ENCODE measurements at regions of chr9 and their contacts with region 1.

Region 1: GRCh38 chr9:3525836-3526164 is at the start of gene RFX3:
- DNase-seq: peak; percentile 92
- ATAC-seq: peak; percentile 62
- H3K4me3 Mint-ChIP-seq: peak within 1 kb of the TSS; percentile 96
- H3K27ac Mint-ChIP-seq: peak within 1 kb of the TSS; percentile 99
- H3K4me1 Mint-ChIP-seq: peaks cover 40% of the 10 kb centered on the region
- H3K27me3 Mint-ChIP-seq: no peaks in the 10 kb centered on the region
- CTCF ChIP-seq: no peak
- total RNA-seq, gene RFX3: 10.3 to 12.3 TPM

Region 2: DNA sequence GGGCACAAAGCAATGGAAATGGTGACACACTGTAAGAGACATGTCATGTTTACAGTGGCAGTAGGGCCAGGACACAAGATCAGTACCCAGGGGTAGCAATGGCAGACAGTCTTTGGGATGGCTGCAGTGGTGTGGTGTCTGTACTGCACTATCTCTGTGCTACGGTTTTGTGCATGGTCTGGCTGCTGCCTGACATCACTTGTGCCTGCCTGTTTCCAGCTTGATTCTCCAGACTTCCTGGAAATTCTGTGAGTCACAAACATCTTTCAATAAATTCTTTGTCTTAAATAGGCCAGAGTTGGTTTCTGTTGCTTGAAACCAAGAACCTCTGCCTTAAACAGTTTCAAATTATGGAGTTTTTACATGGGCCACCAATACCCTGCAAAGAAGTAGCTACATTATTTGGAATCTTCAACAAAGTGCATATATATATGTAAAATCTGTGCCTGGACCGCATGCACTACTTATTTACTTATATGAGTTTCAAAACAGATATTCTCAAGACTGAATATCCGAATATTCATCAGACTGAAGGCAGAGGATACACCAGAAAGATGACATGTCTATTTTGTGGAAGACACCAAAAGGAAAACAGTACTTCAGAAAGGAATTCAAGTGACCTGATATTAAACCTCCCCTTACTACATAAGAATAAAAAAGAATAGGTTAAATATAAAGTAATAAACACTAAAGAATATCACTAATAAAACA is 188.1 kb before region 1 on chr9:
- CTCF ChIA-PET with region 1: no interaction called
- POLR2A ChIA-PET with region 1: no interaction called
- intact Hi-C with region 1: no loop called
- DNase-seq: peak; percentile 46
- ATAC-seq: peak; percentile 80
- H3K4me3 Mint-ChIP-seq: no peak overlapping the region
- H3K27ac Mint-ChIP-seq: peak overlapping the region; percentile 53
- H3K4me1 Mint-ChIP-seq: peaks cover 38% of the 10 kb centered on the region
- H3K27me3 Mint-ChIP-seq: no peaks in the 10 kb centered on the region
- CTCF ChIP-seq: no peak

Region 3: DNA sequence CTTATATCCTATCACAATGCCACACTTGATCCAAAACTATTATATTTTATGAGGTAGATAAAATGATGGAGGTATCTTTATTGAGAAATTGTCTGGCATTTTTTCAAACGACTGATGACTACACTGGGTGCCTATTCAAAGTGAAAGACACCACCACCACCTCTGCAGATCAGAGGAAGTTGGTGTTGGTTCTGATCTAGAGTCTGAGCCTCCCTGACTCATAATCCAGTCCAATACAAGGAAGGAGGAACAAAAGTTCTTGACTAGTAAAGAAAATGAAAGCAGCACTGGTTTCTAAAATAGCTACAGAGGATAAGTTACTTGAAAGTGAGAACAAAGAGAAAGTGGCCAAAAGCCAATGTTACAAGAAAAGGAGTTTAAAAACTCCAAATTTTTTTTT is 139.9 kb before region 1 on chr9:
- CTCF ChIA-PET with region 1: no interaction called
- POLR2A ChIA-PET with region 1: interaction called, 4 read pairs
- intact Hi-C with region 1: loop called (anchors 10 kb)
- DNase-seq: peak; percentile 71
- ATAC-seq: peak; percentile 100
- H3K4me3 Mint-ChIP-seq: no peak overlapping the region
- H3K27ac Mint-ChIP-seq: peak overlapping the region; percentile 25
- H3K4me1 Mint-ChIP-seq: peaks cover 45% of the 10 kb centered on the region
- H3K27me3 Mint-ChIP-seq: no peaks in the 10 kb centered on the region
- CTCF ChIP-seq: no peak

Region 4: DNA sequence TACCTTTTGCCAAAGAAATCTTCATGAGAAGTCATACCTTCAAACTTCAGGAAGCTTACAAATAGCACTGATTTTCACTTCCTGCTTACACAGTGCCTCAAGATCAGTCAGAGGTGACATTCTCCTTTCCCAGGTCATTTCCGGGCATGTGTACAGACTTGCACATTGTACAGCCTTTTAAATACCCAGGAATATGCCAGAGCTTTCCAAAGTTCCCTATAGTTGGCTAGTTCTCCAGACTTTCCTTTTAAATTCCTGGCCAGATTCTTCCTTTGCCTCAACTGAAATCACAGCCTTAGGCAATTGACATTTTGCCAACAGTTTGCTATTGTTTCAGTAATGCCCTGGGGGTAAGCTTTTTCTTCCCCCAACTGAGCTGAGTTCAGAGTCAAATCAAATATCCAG is 47.2 kb before region 1 on chr9:
- CTCF ChIA-PET with region 1: interaction called, 4 read pairs
- POLR2A ChIA-PET with region 1: interaction called, 20 read pairs
- intact Hi-C with region 1: loop called (anchors 5 kb)
- DNase-seq: peak; percentile 10
- ATAC-seq: peak; percentile 35
- H3K4me3 Mint-ChIP-seq: peak overlapping the region; percentile 17
- H3K27ac Mint-ChIP-seq: peak overlapping the region; percentile 94
- H3K4me1 Mint-ChIP-seq: peaks cover 66% of the 10 kb centered on the region
- H3K27me3 Mint-ChIP-seq: no peaks in the 10 kb centered on the region
- CTCF ChIP-seq: no peak

Region 5: GRCh38 chr9:3578786-3579185 is 53.0 kb after region 1 on chr9:
- CTCF ChIA-PET with region 1: no interaction called
- POLR2A ChIA-PET with region 1: no interaction called
- intact Hi-C with region 1: loop called (anchors 5 kb)
- DNase-seq: peak; percentile 5
- ATAC-seq: peak; percentile 61
- H3K4me3 Mint-ChIP-seq: no peak overlapping the region
- H3K27ac Mint-ChIP-seq: peak overlapping the region; percentile 50
- H3K4me1 Mint-ChIP-seq: peaks cover 7% of the 10 kb centered on the region
- H3K27me3 Mint-ChIP-seq: no peaks in the 10 kb centered on the region
- CTCF ChIP-seq: no peak

Region 6: DNA sequence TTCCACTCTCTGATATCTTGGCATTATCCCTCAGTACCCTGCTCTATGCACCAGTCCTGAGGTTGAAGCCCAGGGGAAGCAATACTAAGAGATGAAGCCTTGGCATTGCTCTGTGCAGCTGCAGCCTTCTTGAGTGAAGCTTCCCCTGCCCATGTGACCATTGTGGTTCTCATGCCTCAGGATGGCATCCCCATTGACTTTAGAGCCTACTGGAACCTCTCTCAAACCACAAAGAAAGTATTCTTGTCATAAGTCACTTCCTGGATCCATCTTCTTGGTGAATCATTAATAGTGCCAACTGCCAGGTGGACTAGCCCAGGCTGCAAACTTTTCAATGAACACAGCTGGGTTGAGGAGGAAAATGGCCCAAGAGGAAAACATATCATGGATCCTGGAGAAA is 283.9 kb after region 1 on chr9:
- CTCF ChIA-PET with region 1: no interaction called
- POLR2A ChIA-PET with region 1: no interaction called
- intact Hi-C with region 1: no loop called
- DNase-seq: no peak
- ATAC-seq: no peak
- H3K4me3 Mint-ChIP-seq: no peak overlapping the region
- H3K27ac Mint-ChIP-seq: no peak overlapping the region
- H3K4me1 Mint-ChIP-seq: no peaks in the 10 kb centered on the region
- H3K27me3 Mint-ChIP-seq: peaks cover 15% of the 10 kb centered on the region
- CTCF ChIP-seq: no peak

Measured in activated CD8-positive, alpha-beta T cell treated with anti-CD3 and anti-CD28 coated beads for 36 hours (primary cell).